AG04449 (cell line): ENCODE measurements at regions of chr21 and their contacts with region 1.

Region 1: DNA sequence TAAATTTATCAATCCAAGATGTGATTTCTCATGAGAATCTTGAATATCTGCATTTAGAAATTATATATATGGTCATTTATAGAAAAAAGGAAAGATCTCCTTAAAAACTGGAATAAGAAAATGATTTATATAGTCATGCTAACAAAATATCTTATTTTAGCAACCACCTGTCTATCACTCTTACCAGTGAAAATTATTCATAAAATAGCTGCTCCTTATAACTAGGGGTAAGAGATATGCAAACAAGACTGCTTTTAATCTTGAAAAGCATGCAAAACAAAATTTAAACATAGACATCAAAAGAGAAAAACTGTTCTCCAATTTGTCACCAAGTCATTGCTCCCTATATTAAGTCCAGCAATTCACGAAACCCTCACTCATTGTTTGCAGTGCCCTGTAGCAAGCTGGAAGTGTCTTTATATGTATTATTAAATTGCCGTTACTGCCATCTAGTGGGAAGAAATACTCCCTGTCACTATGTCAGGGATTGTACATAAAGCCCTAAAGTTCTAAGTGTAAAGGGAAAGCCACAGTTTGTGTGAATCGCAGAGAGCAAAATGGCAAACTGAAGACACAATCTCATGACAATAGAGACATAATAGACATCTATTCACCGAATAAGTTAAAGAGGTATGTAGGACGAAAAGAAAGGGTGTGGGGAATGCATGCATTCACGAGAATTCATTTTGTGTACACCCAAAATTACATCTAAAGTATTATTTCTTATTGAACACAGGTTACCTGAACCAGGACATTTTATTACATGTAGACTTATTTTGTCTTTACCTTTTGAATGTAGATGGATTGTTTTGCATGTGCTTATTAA is 600.5 kb downstream of the USP25 start:
- DNase-seq: peak; percentile 24
- H3K4me3 ChIP-seq: no peak overlapping the region
- CTCF ChIP-seq: peak; percentile 39

Region 2: DNA sequence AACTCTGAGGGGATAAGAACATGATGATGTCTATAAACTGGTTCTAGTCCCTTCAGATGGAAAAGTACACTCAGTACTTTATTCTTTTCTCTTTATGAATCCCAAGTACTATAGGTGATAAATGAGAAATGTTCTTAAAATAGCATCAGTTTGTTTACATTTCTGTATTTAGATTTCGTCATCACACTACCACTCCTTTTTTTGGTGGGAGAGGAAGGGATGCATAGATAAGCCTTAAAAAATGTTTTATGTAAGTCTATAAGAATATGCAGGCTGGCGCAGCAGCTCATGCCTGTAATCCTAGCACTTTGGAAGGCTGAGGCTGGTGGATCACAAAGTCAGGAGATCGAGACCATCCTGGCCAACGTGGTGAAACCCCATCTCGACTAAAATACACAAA is 455.7 kb before region 1 on chr21:
- CTCF ChIA-PET with region 1: no interaction called
- POLR2A ChIA-PET with region 1: no interaction called
- DNase-seq: no peak
- H3K4me3 ChIP-seq: no peak overlapping the region
- CTCF ChIP-seq: no peak

Region 3: GRCh38 chr21:16002874-16003466 is 327.3 kb before region 1 on chr21:
- CTCF ChIA-PET with region 1: interaction called, 59 read pairs
- POLR2A ChIA-PET with region 1: no interaction called
- DNase-seq: no peak
- H3K4me3 ChIP-seq: no peak overlapping the region
- CTCF ChIP-seq: peak; percentile 36

Region 4: GRCh38 chr21:16046625-16047340 is 283.5 kb before region 1 on chr21:
- CTCF ChIA-PET with region 1: no interaction called
- POLR2A ChIA-PET with region 1: no interaction called
- DNase-seq: no peak
- H3K4me3 ChIP-seq: no peak overlapping the region
- CTCF ChIP-seq: no peak

Region 5: GRCh38 chr21:16071092-16071491 is 259.2 kb before region 1 on chr21:
- CTCF ChIA-PET with region 1: interaction called, 21 read pairs
- POLR2A ChIA-PET with region 1: no interaction called
- DNase-seq: no peak
- H3K4me3 ChIP-seq: peak overlapping the region; percentile 59
- CTCF ChIP-seq: no peak

Region 6: DNA sequence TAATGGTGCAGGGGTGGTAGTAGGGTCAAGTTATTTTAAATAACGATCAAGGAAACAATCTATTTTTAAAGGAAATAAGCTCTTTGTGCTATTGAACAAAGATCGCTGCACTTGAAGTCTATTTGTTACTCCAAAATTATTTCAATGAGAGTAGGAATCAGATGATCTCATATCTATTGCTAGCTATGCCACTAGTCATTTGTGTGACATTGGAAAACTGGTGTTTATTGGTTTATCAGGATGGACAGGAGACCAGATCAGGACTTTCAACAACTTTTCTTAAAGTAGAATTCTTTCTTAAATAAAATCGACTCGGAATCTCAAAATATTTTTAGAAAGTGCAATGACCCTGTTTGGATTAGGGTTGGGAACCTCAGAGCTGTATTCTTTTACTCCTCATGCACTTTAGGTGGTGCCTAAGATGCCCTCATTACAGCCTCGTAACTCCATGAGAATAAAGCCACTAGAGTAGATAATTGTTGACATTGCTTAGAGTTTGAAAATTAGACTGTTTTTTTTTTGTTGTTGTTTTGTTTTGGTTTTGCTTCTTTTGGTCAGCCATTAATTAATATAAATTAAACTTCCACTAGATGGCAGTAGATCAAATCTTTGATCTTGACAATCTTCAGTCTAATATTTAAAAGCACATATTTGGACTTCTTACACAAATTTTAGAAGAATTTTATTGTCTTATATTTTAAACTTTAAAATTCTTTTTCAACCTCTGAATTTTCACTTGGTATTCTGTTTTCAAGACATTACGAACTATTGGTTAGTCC is 248.1 kb before region 1 on chr21:
- CTCF ChIA-PET with region 1: interaction called, 131 read pairs
- POLR2A ChIA-PET with region 1: no interaction called
- DNase-seq: no peak
- H3K4me3 ChIP-seq: no peak overlapping the region
- CTCF ChIP-seq: no peak

Region 7: DNA sequence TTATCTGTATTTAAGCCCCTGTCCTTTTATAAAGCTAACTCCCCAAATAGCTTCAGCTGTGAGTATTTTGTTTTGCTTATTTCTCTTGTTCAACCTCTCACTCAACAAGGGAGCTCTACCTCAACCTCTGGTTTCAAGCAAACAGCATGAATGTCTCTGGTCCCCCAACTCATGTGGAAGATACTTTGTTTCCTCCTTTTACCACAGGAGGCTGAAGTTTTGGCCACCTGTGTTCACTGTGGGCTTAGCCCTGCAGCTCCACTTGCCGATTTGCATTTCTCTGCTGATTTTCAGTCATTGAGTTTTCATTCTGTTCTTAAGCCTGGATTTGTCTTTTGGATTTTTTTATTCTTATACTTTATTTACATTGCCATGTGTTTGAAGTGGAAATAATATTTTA is 12.6 kb after region 1 on chr21:
- CTCF ChIA-PET with region 1: interaction called, 11 read pairs
- POLR2A ChIA-PET with region 1: interaction called, 3 read pairs
- DNase-seq: no peak
- H3K4me3 ChIP-seq: no peak overlapping the region
- CTCF ChIP-seq: no peak